Right cardiac atrium (tissue), 5 donors: ENCODE measurements at regions of chr15 and their contacts with region 1.

Region 1: GRCh38 chr15:73697033-73697467 is 12.9 kb downstream of the CD276 start:
- DNase-seq: peak; percentile 86 to 95 (median 92)
- ATAC-seq: peak; percentile 93 to 96
- H3K4me3 ChIP-seq: no peak overlapping the region
- H3K27ac ChIP-seq: no peak overlapping the region
- H3K4me1 ChIP-seq: peaks cover 17% of the 10 kb centered on the region
- H3K27me3 ChIP-seq: no peaks in the 10 kb centered on the region

Region 2: DNA sequence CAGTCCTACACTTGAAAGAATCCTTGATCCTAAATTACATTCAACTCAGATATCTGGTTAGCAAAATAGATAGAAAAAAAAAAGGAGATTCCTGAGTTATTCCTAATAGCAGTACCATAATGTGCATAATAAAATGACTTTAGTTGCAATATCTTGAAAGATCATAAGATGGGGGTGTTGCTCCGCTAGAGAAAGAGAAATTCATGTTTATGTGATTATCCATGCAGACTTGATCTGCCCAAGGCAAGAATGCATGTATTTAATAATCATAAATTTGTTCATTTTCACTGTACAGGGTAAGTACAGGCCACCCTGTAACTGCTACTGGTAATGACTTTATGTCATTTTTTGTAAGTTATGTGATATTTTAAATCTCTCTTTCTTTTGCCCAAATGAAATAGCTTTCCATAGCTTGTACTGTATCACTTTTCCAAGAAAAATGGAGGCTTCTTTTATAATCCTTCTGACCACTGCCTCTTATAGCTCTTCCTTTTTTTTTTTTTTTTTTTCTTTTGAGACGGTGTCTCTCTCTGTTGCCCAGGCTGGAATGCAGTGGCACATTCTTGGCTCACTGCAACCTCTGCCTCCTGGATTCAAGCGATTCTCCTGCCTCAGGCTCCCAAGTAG is 412.8 kb before region 1 on chr15:
- intact Hi-C with region 1: loop called in 1 of 4 experiments (anchors 10 kb)
- DNase-seq: no peak
- ATAC-seq: no peak
- H3K4me3 ChIP-seq: no peak overlapping the region
- H3K27ac ChIP-seq: no peak overlapping the region
- H3K4me1 ChIP-seq: no peaks in the 10 kb centered on the region
- H3K27me3 ChIP-seq: no peaks in the 10 kb centered on the region

Region 3: DNA sequence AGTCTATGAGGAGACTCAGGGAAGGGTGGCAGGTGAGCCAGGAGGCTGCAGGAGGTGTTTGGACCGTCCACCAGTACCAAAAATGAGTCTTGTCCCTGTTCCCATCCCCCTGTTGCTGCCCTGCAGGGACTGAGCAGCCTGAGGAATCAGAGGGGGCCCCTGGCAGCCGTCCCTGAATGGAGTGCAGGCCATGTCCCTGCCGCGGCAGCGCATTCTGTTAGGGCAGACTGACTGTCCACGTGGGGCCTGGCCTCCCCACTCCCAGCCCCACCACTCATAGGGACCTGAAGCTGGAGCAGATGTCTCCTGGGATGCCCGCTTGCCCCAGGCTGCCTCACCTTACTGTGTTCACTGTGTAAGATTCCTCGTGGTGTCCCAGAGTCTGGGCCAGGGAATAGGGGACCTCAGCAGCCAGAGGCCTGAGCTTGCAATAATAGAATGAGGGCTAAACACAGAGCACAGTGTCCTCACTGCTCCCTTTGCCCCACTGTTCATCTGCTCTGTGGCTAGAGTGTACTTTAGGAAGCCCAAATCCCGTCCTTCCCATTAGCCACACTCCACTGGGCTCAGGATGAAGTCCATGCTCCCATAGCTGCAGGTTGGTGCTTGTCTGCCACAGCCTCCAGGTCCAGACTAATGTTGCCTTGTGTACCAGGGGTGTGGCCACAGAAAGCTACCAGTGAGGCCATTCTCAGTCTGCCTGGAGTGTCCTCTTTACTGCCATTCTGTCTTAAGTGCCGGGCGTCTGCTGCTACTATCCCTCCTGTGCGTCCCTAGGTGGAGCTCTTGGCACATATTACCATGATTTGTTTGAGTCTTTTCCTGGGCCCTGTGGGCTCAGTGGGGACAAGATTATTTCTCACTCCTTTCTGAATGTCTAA is 391.5 kb before region 1 on chr15:
- intact Hi-C with region 1: loop called in 1 of 4 experiments (anchors 10 kb)
- DNase-seq: no peak
- ATAC-seq: peak; percentile 64 to 74
- H3K4me3 ChIP-seq: no peak overlapping the region
- H3K27ac ChIP-seq: no peak overlapping the region
- H3K4me1 ChIP-seq: no peaks in the 10 kb centered on the region
- H3K27me3 ChIP-seq: no peaks in the 10 kb centered on the region

Region 4: GRCh38 chr15:73560501-73561117 is 136.4 kb before region 1 on chr15:
- intact Hi-C with region 1: loop called in 2 of 4 experiments (anchors 10 kb)
- DNase-seq: no peak
- ATAC-seq: no peak
- H3K4me3 ChIP-seq: no peak overlapping the region
- H3K27ac ChIP-seq: no peak overlapping the region
- H3K4me1 ChIP-seq: peaks cover 3% of the 10 kb centered on the region
- H3K27me3 ChIP-seq: no peaks in the 10 kb centered on the region

Region 5: GRCh38 chr15:73633111-73633990 is 63.7 kb before region 1 on chr15 and contains the start of gene NPTN:
- intact Hi-C with region 1: loop called in 2 of 4 experiments (anchors 5 to 10 kb)
- DNase-seq: peak; percentile 99 to 100 (median 100)
- ATAC-seq: peak; percentile 97
- H3K4me3 ChIP-seq: peak within 1 kb of the TSS; percentile 98
- H3K27ac ChIP-seq: peak within 1 kb of the TSS; percentile 98
- H3K4me1 ChIP-seq: peaks cover 7% of the 10 kb centered on the region
- H3K27me3 ChIP-seq: no peaks in the 10 kb centered on the region
- total RNA-seq, gene NPTN: 262 to 320 (median 306) TPM

Region 6: DNA sequence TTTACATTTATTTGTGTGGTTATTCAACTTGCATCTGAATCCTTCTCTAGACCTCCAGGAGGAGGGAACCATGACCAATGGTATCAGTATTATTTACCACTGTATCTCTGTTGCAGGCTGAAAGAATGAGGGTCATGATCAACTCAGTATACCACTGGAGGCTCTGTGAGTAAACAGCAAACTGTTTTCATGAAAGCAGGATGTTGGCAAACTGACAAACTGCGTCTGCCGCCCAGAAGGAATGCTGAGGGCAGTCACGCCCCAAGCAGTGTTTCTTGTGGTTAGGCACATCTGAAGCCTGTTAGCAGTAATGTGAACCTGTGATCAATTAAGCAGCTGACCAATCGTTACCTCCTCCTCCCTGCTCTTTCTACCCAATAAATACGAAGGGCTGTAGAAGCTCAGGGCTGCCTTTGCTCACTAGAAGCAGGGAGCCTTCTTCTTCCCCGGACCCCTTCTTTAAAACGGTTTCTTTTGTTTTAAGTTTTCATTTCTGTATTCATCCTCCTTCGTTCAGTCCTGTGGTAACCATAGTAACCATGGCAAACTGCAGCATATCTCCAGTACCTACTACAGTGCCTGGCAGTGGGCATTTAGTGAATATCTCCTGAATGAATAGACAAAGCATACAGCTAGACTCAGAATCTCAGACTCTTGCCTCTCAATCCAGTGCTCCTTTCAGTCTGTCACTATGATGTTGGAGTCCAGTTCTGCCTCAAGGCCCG is 57.4 kb before region 1 on chr15:
- intact Hi-C with region 1: loop called in 3 of 4 experiments (anchors 5 to 10 kb)
- DNase-seq: no peak
- ATAC-seq: no peak
- H3K4me3 ChIP-seq: no peak overlapping the region
- H3K27ac ChIP-seq: no peak overlapping the region
- H3K4me1 ChIP-seq: no peaks in the 10 kb centered on the region
- H3K27me3 ChIP-seq: no peaks in the 10 kb centered on the region

Region 7: DNA sequence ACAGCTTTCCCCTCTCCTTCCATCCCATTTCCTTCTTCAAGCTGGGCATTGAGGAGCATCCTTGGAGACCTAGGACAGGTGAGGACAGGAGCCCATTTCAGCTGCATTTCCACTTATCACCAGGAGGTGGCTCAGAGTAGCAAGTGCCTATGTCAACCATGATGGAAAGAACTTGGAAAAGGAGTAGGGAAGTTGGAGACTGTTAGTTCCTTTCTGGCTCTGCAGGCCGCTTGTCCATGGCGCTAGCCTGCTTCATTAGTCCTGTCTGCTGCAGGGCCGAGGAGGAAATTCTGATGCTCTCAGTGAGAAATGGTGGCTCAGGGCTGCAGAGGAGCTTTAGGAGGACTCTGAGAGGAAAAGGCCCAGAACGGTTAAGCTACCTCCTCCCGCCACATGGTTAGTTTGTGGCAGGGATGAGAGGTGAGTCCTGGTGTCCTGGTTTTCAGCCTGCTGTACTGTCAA is 19.9 kb before region 1 on chr15:
- intact Hi-C with region 1: loop called in 1 of 4 experiments (anchors 2 kb)
- DNase-seq: peak; percentile 36 to 75 (median 63)
- ATAC-seq: peak; percentile 76 to 86
- H3K4me3 ChIP-seq: no peak overlapping the region
- H3K27ac ChIP-seq: no peak overlapping the region
- H3K4me1 ChIP-seq: no peaks in the 10 kb centered on the region
- H3K27me3 ChIP-seq: no peaks in the 10 kb centered on the region

Region 8: GRCh38 chr15:73899768-73900712 is 203.0 kb after region 1 on chr15:
- intact Hi-C with region 1: no loop called
- DNase-seq: no peak
- ATAC-seq: no peak
- H3K4me3 ChIP-seq: no peak overlapping the region
- H3K27ac ChIP-seq: no peak overlapping the region
- H3K4me1 ChIP-seq: no peaks in the 10 kb centered on the region
- H3K27me3 ChIP-seq: no peaks in the 10 kb centered on the region